SK-N-SH (cell line): ENCODE measurements at regions of chr1 and their contacts with region 1.

Region 1: GRCh38 chr1:63327417-63328139 is 5.2 kb downstream of the FOXD3 start:
- DNase-seq: peak; percentile 89
- H3K4me3 ChIP-seq: peak overlapping the region in 1 of 2 experiments; percentile 34; a peak in 1 of 4 replicates
- H3K27ac ChIP-seq: no peak overlapping the region
- H3K4me1 ChIP-seq: peaks cover 0 to 3% of the 10 kb centered on the region in 2 experiments; a peak in 1 of 4 replicates
- H3K27me3 ChIP-seq: peaks cover 83% of the 10 kb centered on the region
- CTCF ChIP-seq: peak; percentile 80
- EP300 ChIP-seq: no peak
- RAD21 ChIP-seq: peak; percentile 73

Region 2: DNA sequence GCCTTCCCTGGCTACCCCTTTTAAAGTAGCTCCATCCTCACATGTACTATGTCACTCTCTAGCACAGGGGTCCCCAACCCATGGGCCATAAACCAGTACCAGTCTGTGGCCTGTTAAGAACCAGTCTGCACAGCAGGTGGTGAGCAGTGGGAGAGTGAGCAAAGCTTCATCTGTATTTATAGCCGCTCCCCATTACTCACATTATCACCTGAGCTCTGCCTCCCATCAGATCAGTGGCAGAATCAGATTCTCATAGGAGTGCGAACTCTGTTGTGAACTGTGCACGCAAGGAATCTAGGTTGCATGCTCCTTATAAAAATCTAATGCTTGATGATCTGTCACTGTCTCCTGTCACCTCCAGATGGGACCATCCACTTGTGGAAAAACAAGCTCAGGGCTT is 121.8 kb before region 1 on chr1:
- CTCF ChIA-PET with region 1: no interaction called
- POLR2A ChIA-PET with region 1: no interaction called
- DNase-seq: no peak
- H3K4me3 ChIP-seq: no peak overlapping the region
- H3K27ac ChIP-seq: no peak overlapping the region
- H3K4me1 ChIP-seq: peaks cover 0 to under 1% of the 10 kb centered on the region in 2 experiments; a peak in 1 of 4 replicates
- H3K27me3 ChIP-seq: no peaks in the 10 kb centered on the region; the same call in 1 of the 2 replicates
- CTCF ChIP-seq: no peak
- EP300 ChIP-seq: no peak
- RAD21 ChIP-seq: no peak

Region 3: GRCh38 chr1:63316984-63317816 is 10.4 kb before region 1 on chr1:
- CTCF ChIA-PET with region 1: interaction called, 86 read pairs
- POLR2A ChIA-PET with region 1: no interaction called
- DNase-seq: peak; percentile 75
- H3K4me3 ChIP-seq: peak overlapping the region; percentile 28 to 44
- H3K27ac ChIP-seq: no peak overlapping the region
- H3K4me1 ChIP-seq: peaks cover 4 to 5% of the 10 kb centered on the region in 2 experiments; a peak in 2 of 4 replicates
- H3K27me3 ChIP-seq: peaks cover 85% of the 10 kb centered on the region
- CTCF ChIP-seq: peak; percentile 49
- EP300 ChIP-seq: no peak
- RAD21 ChIP-seq: peak; percentile 26; the same call in 1 of the 2 replicates

Region 4: DNA sequence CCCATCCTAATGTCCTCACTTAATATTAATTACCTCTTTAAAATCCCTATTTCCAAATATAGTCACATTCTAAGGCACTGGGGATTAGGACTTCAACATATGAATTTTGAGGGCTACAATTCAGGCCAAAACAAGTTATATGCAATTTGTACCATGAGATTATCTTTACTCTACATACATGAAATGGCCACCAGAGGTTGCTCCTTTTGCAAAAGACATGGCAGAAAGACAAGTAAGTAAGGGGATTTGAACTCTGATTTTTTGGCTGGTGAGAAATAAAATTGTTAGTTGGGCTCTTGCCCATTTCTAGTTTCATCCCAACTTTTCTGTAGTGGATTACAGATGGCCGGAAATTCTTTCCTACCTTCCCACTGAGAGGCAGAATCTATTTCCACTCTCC is 35.0 kb after region 1 on chr1:
- CTCF ChIA-PET with region 1: interaction called, 20 read pairs
- POLR2A ChIA-PET with region 1: no interaction called
- DNase-seq: no peak
- H3K4me3 ChIP-seq: no peak overlapping the region
- H3K27ac ChIP-seq: no peak overlapping the region
- H3K4me1 ChIP-seq: peaks cover 0 to 5% of the 10 kb centered on the region in 2 experiments; a peak in 1 of 4 replicates
- H3K27me3 ChIP-seq: no peaks in the 10 kb centered on the region; the same call in 1 of the 2 replicates
- CTCF ChIP-seq: peak; percentile 16; the same call in 1 of the 2 replicates
- EP300 ChIP-seq: no peak
- RAD21 ChIP-seq: no peak

Region 5: GRCh38 chr1:63442141-63442475 is 114.5 kb after region 1 on chr1:
- CTCF ChIA-PET with region 1: interaction called, 50 read pairs
- POLR2A ChIA-PET with region 1: no interaction called
- DNase-seq: no peak
- H3K4me3 ChIP-seq: no peak overlapping the region
- H3K27ac ChIP-seq: no peak overlapping the region
- H3K4me1 ChIP-seq: no peaks in the 10 kb centered on the region
- H3K27me3 ChIP-seq: no peaks in the 10 kb centered on the region
- CTCF ChIP-seq: no peak
- EP300 ChIP-seq: no peak
- RAD21 ChIP-seq: no peak

Region 6: DNA sequence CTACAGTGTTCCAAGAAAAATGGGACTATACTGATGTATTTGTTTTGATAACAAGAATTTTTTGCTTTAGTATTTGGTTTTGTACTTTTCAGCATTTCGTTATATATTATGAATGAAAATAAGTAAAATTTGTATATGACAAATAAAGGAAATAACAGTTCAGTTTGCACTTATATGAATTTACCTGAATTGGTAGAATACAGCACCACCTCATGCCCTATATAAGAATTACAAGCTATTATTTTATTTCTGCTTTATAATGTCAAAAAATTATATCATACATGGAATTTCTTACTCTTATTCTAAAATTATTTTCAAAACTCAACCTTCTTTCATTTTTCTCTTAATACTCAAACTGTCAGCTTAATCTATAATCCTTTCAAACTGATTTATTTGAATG is 210.4 kb after region 1 on chr1:
- CTCF ChIA-PET with region 1: interaction called, 28 read pairs
- POLR2A ChIA-PET with region 1: no interaction called
- DNase-seq: peak; percentile 7
- H3K4me3 ChIP-seq: no peak overlapping the region
- H3K27ac ChIP-seq: no peak overlapping the region
- H3K4me1 ChIP-seq: no peaks in the 10 kb centered on the region
- H3K27me3 ChIP-seq: no peaks in the 10 kb centered on the region
- CTCF ChIP-seq: peak; percentile 70
- EP300 ChIP-seq: no peak
- RAD21 ChIP-seq: peak; percentile 59